ENCODE measurements at regions of chr7 and their contacts with region 1.

Region 1: DNA sequence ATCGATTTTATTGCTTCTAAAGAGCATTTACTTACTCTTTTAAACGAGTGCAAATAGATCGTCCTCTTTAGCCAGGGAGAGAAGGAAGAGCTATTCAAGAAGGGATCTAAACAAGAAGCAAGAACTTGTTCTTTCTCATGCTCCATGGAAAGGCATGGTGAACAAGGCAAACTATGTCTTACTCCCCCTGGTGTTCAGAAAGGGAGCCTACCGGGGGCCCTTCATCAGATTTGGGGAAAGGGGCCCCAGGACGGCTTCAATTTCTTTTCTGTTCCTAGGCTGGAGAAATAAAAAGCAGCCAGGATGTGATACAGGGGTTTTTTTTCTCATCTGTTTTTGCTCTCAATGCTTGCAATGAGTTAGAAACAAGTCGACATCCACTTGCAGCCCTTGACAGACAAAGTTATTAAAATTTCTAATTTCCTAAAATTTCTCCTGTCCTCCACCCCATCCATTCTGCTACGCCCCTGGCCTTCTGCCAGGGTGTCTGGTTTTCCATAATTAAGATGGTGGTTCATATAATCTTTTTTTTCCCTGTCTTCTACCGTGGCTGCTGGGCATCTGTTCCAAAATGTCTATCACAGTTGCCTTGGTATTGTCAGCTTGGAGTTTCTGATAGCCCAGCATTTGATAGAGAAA is 214.4 kb downstream of the CREB5 start:
- DNase-seq: no peak
- H3K4me3 ChIP-seq: no peak overlapping the region
- H3K27ac ChIP-seq: no peak overlapping the region
- H3K4me1 ChIP-seq: peaks cover 0 to 5% (median 0%) of the 10 kb centered on the region in 6 donors
- H3K27me3 ChIP-seq: peaks cover 0 to 6% (median 0%) of the 10 kb centered on the region in 7 donors
- CTCF ChIP-seq: peak in 10 of 11 experiments; percentile 15 to 79 (median 64)
- POLR2A ChIP-seq: no peak

Region 2: GRCh38 chr7:28298870-28299518 is 327.7 kb before region 1 on chr7:
- intact Hi-C with region 1: loop called (anchors 10 kb)
- DNase-seq: no peak
- H3K4me3 ChIP-seq: no peak overlapping the region
- H3K27ac ChIP-seq: no peak overlapping the region
- H3K4me1 ChIP-seq: peaks cover 0 to 18% (median 4%) of the 10 kb centered on the region in 6 donors
- H3K27me3 ChIP-seq: peaks cover 0 to 4% (median 0%) of the 10 kb centered on the region in 7 donors
- CTCF ChIP-seq: peak in 3 of 11 experiments; percentile 17 to 24 (median 19)
- POLR2A ChIP-seq: no peak

Region 3: GRCh38 chr7:28389504-28390395 is 237.0 kb before region 1 on chr7:
- intact Hi-C with region 1: loop called (anchors 10 kb)
- DNase-seq: no peak
- H3K4me3 ChIP-seq: peak overlapping the region in 1 of 8 donors; percentile 39
- H3K27ac ChIP-seq: no peak overlapping the region
- H3K4me1 ChIP-seq: peaks cover 0 to 6% (median 5%) of the 10 kb centered on the region in 6 donors
- H3K27me3 ChIP-seq: peaks cover 0 to 44% (median 0%) of the 10 kb centered on the region in 7 donors
- CTCF ChIP-seq: peak in 9 of 11 experiments; percentile 37 to 82 (median 65)
- POLR2A ChIP-seq: no peak